ENCODE measurements at regions of chr12 and their contacts with region 1.

Region 1: DNA sequence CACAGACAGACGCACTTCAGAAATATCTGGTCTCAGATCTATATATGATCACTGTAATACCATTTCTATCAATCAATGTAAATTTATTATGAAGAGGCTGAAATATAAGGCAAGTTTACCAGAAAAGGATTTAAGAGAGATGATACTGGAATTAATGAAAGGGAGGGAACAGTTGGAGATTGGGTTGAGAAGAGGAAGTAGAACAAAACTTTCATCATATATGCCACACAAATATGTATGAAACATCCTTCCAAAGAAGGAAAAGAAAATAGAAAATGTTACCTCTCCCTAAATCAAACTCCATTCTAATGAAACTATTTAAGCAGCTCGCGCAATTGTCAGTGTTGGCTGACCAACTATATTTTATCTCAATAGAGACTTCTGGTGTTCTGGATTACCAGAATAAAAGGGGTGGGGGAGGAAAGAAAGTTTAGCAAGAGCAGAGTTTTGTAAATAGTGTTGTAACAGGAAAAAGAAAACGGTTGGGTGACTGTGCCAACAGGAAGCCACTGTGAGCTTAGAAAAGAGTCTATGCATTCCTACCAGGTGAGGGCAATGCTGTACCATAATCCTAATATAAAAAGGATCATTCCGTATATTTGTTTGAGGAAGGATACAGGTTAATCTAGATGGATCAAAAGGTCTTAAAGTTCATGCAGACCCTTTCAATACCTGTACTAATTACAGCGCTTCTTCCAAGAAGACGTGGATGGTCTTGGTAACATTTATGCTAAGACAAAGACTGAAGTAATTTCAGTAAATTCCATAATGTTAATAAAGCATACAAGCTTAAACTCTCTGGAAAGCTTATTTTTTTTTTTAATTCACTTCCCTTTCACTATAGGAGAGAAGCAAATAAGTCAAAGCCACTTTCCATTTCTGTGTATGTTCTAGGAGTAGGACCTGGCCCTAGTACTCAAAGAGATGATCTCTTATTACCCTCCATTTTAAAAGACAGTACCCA is 14.5 kb upstream of the LLPH start:
- DNase-seq: peak; percentile 62
- H3K4me3 ChIP-seq: no peak overlapping the region
- H3K27ac ChIP-seq: peak overlapping the region; percentile 12 to 38
- H3K4me1 ChIP-seq: peaks cover 3% of the 10 kb centered on the region
- H3K27me3 ChIP-seq: no peaks in the 10 kb centered on the region
- CTCF ChIP-seq: peak in 3 of 4 experiments; percentile 49 to 71 (median 60)
- POLR2A ChIP-seq: no peak

Region 2: DNA sequence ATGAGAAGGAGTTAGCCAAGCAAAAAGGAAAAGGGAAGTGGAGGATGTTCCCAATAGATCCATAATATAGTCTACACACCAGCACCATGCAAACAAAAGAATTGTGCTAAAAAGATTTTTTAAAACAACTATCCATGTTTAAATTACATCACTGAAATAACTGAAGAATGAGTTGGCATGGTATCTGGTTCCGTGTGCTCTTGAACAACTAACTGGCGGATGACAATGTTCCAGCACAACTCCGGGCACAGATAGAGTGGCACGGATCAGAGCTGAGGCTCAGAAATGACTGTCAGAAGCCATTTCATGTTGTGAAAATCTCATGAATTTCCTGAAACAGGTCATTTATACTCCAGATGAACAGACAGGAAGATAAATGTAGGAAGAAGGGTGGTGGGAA is 167.7 kb before region 1 on chr12:
- intact Hi-C with region 1: no loop called
- DNase-seq: no peak
- H3K4me3 ChIP-seq: no peak overlapping the region
- H3K27ac ChIP-seq: no peak overlapping the region
- H3K4me1 ChIP-seq: no peaks in the 10 kb centered on the region
- H3K27me3 ChIP-seq: peaks cover 1% of the 10 kb centered on the region
- CTCF ChIP-seq: no peak
- POLR2A ChIP-seq: no peak

Region 3: GRCh38 chr12:66092559-66093269 is 52.4 kb before region 1 on chr12:
- intact Hi-C with region 1: no loop called
- DNase-seq: no peak
- H3K4me3 ChIP-seq: no peak overlapping the region
- H3K27ac ChIP-seq: no peak overlapping the region
- H3K4me1 ChIP-seq: no peaks in the 10 kb centered on the region
- H3K27me3 ChIP-seq: no peaks in the 10 kb centered on the region
- CTCF ChIP-seq: no peak
- POLR2A ChIP-seq: no peak

Region 4: DNA sequence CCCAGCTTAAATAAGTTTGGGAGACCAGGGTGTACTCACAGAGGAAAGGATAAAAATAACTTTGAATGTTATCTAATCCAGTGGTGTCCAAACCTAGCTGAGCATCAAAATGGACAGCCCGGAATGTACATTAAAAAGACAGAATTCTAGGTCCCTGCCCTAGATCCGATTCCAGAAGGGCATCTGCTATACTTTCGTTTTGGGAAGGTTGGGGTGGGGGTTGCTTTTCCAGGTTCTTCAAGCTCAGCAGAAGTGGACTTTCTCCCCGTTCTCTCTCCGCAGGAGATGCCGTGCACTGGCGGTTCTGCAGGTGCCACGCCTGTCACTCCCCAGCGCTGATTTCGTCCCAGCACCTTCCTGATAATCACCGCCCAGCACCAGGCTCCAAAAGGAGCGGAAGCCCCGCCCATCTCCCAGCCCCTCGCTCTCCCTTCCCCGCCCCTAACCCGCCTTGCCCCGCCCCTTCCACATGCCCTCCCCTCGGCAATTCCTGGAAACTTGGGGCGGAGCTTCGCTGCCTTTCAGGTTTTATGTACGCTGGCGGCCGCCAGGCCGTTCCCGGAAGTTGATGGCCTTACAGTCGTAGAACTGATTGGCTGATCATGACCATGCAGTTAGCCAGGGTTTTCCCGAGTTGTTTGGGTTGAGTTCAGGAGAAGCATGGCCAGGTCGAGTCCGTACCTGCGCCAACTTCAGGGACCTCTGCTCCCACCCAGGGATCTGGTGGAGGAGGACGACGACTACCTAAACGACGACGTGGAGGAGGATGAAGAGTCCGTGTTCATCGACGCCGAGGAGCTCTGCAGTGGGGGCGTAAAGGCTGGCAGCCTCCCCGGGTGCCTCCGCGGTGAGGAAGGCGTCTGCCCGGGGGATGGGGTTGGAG is 157.1 kb after region 1 on chr12 and contains the start of gene HELB:
- intact Hi-C with region 1: loop called (anchors 10 kb)
- DNase-seq: peak; percentile 98
- H3K4me3 ChIP-seq: peak within 1 kb of the TSS; percentile 57 to 68
- H3K27ac ChIP-seq: peak within 1 kb of the TSS; percentile 71 to 87
- H3K4me1 ChIP-seq: no peaks in the 10 kb centered on the region
- H3K27me3 ChIP-seq: no peaks in the 10 kb centered on the region
- CTCF ChIP-seq: peak in 2 of 4 experiments; percentile 6 to 27
- POLR2A ChIP-seq: peak; percentile 58
- total RNA-seq, gene HELB: 2.7 to 4.1 TPM

Measured in prostate gland (tissue), 2 donors.